ENCODE measurements at regions of chr14 and their contacts with region 1.

Region 1: GRCh38 chr14:45253068-45253753 is at the start of gene MIS18BP1:
- DNase-seq: peak; percentile 88
- H3K4me3 ChIP-seq: peak within 1 kb of the TSS; percentile 84
- CTCF ChIP-seq: peak; percentile 78

Region 2: DNA sequence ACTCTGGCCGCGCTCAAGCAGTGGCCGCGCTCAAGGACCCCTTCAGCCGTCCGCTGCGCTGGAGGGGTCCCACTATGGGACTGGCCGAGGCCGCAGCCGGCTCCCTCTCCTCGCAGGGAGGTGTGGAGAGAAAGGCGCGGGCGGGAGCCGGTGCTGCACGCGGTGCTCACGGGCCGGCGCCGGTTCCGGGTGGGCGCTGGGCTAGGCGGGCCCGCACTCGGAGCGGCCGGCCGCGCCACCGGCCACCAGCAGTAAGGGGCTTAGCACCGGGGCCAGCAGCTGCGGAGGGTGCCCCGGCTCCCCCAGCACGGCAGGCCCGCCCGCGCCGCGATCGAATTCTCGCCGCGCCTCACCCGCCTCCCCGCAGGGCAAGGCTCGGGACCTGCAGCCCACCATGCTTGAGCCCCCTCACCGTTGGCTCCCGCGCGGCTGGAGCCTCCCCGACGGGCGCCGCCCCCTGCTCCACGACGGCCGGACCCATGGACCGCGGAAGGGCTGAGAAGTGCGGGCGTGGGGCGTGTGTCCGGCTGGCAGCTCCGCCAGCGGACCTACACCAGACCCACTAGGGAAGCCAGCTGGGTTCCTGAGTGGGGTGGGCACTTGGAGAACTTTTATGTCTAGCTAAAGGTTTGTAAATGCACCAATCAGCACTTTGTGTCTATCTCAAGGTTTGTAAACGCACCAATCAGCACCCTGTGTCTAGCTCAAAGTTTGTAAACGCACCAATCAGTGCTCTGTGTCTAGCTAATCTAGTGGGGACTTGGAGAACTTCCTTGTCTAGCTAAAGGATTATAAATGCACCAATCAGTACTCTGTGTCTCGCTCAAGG is 341.0 kb before region 1 on chr14:
- in situ Hi-C with region 1: loop called (anchors 25 kb)
- DNase-seq: no peak
- H3K4me3 ChIP-seq: peak overlapping the region; percentile 31
- CTCF ChIP-seq: no peak